ENCODE measurements at regions of chr4 and their contacts with region 1.

Region 1: GRCh38 chr4:143294310-143294709 is 42.4 kb upstream of the GAB1 start:
- DNase-seq: peak; percentile 83 to 86
- ATAC-seq: peak; percentile 89 to 94 (median 92)
- H3K4me3 ChIP-seq: no peak overlapping the region
- H3K27ac ChIP-seq: peak overlapping the region in 5 of 10 donors; percentile 6 to 48 (median 25)
- H3K4me1 ChIP-seq: peaks cover 0 to 36% (median 21%) of the 10 kb centered on the region in 9 donors
- H3K27me3 ChIP-seq: no peaks in the 10 kb centered on the region
- CTCF ChIP-seq: no peak

Region 2: DNA sequence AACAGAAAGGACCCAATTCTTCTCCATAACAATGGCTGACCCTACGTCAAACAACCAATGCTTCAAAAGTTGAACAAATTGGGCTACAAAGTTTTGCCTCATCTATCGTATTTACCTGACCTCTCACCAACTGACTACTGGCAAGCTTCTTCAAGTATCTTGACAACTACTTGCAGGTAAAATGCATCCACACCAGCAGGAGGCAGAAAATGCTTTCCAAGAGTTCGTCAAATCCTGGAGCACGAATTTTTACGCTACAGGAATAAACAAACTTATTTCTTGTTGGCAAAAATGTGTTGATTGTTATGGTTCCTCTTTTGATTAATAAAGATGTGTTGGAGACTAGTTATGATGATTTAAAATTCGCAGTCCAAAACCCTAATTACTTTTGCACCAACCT is 35.7 kb after region 1 on chr4:
- intact Hi-C with region 1: loop called in 3 of 10 experiments (anchors 5 to 10 kb)
- DNase-seq: no peak
- ATAC-seq: no peak
- H3K4me3 ChIP-seq: no peak overlapping the region
- H3K27ac ChIP-seq: no peak overlapping the region
- H3K4me1 ChIP-seq: peaks cover 0 to 3% (median 0%) of the 10 kb centered on the region in 9 donors
- H3K27me3 ChIP-seq: no peaks in the 10 kb centered on the region
- CTCF ChIP-seq: no peak